ENCODE measurements at regions of chr5 and their contacts with region 1.

Region 1: DNA sequence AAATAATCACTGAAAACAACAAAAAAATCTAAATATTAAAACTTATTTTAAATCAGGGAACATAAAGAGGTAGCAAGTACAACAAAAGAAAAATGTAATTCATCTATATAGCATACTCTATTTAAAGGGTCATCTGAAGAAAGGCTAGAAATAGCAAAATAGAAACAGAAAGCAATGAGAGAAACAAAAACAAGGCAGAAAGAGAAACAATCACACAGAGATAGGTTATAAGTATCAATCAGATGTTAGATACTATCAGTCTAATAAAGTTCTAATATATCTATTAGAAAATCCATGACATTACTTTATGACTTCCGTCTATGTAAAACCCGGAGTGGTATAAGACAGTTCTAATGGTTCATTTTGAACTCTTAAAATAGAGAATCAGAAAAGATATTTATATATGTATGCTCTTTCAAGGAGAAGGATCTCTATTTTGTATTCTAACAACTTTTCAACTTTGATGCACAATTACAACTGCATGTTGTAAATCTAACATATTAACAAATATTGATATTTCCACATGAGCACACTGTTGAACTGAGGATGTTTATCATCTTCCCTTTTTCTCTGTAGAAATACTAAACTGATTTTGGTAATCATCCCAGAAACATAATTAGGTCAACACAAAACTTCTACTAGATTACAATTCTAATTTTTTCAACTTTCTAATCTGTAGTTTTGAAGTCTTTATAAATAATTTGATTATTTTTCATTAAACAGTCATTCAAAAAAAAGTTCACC is 15.8 kb downstream of the RICTOR start:
- DNase-seq: no peak
- ATAC-seq: no peak
- H3K4me3 ChIP-seq: peak overlapping the region in 3 of 5 experiments; percentile 19 to 54 (median 28)
- H3K4me3 Mint-ChIP-seq: peak overlapping the region; percentile 55
- H3K27ac ChIP-seq: peak overlapping the region in 1 of 2 donors; percentile 68
- H3K27ac Mint-ChIP-seq: no peak overlapping the region
- H3K4me1 ChIP-seq: peaks cover 0 to 20% of the 10 kb centered on the region in 2 donors
- H3K4me1 Mint-ChIP-seq: peaks cover 51% of the 10 kb centered on the region
- H3K27me3 ChIP-seq: no peaks in the 10 kb centered on the region
- H3K27me3 Mint-ChIP-seq: no peaks in the 10 kb centered on the region
- CTCF ChIP-seq: no peak

Region 2: GRCh38 chr5:39024005-39024404 is 34.3 kb before region 1 on chr5:
- CTCF ChIA-PET with region 1: no interaction called
- POLR2A ChIA-PET with region 1: no interaction called
- intact Hi-C with region 1: loop called (anchors 5 kb)
- DNase-seq: no peak
- ATAC-seq: no peak
- H3K4me3 ChIP-seq: no peak overlapping the region
- H3K4me3 Mint-ChIP-seq: no peak overlapping the region
- H3K27ac ChIP-seq: no peak overlapping the region
- H3K27ac Mint-ChIP-seq: no peak overlapping the region
- H3K4me1 ChIP-seq: peaks cover 0 to 2% of the 10 kb centered on the region in 2 donors
- H3K4me1 Mint-ChIP-seq: peaks cover 26% of the 10 kb centered on the region
- H3K27me3 ChIP-seq: no peaks in the 10 kb centered on the region
- H3K27me3 Mint-ChIP-seq: no peaks in the 10 kb centered on the region
- CTCF ChIP-seq: no peak